A673 (cell line): ENCODE measurements at regions of chr18 and their contacts with region 1.

Region 1: GRCh38 chr18:55856229-55856628 is 268.2 kb upstream of the TCF4 start:
- DNase-seq: peak; percentile 57
- H3K4me3 ChIP-seq: no peak overlapping the region
- H3K27ac ChIP-seq: no peak overlapping the region
- H3K4me1 ChIP-seq: peaks cover 37% of the 10 kb centered on the region
- H3K27me3 ChIP-seq: no peaks in the 10 kb centered on the region
- CTCF ChIP-seq: no peak

Region 2: DNA sequence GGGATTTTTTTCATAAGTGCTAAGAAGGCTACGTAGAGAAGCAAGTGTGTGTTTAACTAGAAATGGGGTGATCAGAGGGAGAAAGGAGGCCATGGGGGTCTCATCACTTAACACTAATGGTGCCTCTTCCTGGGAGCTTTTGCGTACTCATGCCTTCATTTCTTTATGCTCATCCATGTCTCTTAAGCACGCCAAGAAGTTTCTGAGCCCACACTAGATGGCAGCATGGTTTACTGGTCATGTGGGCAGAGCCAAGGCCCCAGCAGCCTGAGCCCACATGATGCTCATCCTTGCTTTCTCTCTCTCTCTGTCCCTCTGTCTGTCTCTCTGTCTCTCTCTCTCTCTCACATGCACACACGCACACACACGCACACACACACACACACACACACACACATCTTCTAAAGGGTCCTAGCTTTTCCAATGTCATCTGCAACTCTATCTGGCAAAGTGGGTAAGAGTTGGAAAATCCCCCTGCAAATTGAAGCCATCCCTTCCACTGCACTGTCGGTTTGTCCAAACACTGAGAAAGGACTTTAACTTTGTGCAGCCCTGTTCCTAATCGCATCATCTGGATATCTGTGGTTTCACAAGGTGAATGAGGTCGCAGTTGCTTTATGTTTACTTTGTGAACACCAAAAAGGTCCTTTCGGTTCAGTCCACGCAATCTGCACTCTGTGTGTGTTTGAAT is 759.8 kb before region 1 on chr18:
- CTCF ChIA-PET with region 1: no interaction called
- POLR2A ChIA-PET with region 1: no interaction called
- intact Hi-C with region 1: loop called (anchors 10 kb)
- DNase-seq: peak; percentile 79
- H3K4me3 ChIP-seq: no peak overlapping the region
- H3K27ac ChIP-seq: no peak overlapping the region
- H3K4me1 ChIP-seq: peaks cover 9% of the 10 kb centered on the region
- H3K27me3 ChIP-seq: peaks cover 30% of the 10 kb centered on the region
- CTCF ChIP-seq: peak; percentile 71

Region 3: DNA sequence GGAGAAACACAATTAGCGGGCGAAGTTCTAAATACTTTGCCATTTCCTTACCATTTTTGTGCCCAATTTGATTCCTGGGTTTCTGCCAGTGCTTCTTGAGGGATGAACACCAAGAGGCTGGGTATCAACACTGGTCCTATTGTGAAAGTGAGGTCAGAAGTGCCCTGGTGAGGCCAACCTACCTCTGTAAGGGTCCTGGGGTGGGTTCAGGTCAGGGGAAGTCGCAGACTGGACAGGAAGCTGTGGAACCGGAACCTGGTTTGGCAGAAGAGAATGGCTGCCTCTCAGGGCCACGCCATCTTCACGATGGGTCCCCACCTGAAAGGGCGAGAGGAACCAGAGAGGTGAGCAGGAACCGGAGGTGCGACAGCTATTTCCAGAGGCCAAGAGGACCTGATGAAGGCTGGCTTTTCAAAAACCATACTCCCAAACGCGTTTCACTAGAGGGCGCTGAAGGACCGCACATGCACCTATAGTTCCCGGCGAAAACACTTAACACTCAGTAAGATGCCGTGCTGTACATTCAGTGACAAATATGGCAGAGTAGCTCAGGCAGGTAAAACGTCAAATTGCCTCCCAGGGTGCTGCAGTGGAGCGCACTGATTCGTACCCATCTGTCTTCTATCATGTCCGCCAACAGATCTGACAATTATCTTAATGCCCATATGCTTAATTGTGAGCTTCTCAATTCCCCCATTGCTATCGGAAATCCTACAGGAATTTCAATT is 621.7 kb before region 1 on chr18:
- CTCF ChIA-PET with region 1: interaction called, 6 read pairs
- POLR2A ChIA-PET with region 1: no interaction called
- intact Hi-C with region 1: loop called (anchors 10 kb)
- DNase-seq: peak; percentile 91
- H3K4me3 ChIP-seq: peak overlapping the region; percentile 3
- H3K27ac ChIP-seq: peak overlapping the region; percentile 19
- H3K4me1 ChIP-seq: peaks cover 32% of the 10 kb centered on the region
- H3K27me3 ChIP-seq: no peaks in the 10 kb centered on the region
- CTCF ChIP-seq: peak; percentile 83

Region 4: DNA sequence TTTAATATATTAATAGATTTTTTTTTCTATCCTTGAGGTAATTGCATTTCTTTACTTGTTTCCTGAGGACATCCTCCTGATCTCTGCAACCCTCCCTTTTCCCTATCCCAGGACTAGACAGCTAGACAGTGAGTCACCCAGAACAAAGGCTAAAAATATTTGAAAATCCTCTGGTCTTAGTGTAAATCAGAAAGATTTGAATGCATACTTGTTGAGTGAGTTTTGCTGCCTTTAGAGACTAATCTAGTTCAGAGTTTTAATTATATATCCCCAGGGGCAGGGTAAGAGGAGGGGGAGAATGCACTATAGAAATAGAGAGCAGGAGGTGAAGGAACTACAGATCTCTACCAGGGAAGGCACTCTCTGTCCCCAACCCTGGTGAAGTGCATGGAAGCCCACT is 65.9 kb before region 1 on chr18:
- CTCF ChIA-PET with region 1: no interaction called
- POLR2A ChIA-PET with region 1: no interaction called
- intact Hi-C with region 1: loop called (anchors 5 kb)
- DNase-seq: peak; percentile 81
- H3K4me3 ChIP-seq: no peak overlapping the region
- H3K27ac ChIP-seq: no peak overlapping the region
- H3K4me1 ChIP-seq: peaks cover 4% of the 10 kb centered on the region
- H3K27me3 ChIP-seq: no peaks in the 10 kb centered on the region
- CTCF ChIP-seq: no peak

Region 5: DNA sequence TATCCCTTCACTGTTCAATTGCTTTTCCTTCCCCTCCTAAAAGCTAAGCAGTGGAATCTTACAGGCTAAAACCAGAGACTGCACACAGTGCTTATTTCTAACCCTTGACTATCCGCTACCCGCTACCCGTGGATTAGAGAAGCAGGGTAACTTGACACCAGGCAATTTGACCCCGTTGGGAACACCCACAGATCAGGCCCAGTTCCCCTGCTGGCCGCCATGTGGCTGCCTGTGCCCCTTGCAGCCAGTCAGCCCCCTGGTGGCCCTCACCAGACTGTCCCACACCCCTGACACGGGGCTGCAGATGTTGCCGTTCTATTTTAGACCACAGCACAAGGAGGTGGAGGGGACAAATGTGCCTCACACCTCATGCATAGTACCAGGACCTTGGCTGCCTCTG is 707.3 kb after region 1 on chr18:
- CTCF ChIA-PET with region 1: no interaction called
- POLR2A ChIA-PET with region 1: no interaction called
- intact Hi-C with region 1: loop called (anchors 10 kb)
- DNase-seq: no peak
- H3K4me3 ChIP-seq: no peak overlapping the region
- H3K27ac ChIP-seq: no peak overlapping the region
- H3K4me1 ChIP-seq: peaks cover 4% of the 10 kb centered on the region
- H3K27me3 ChIP-seq: no peaks in the 10 kb centered on the region
- CTCF ChIP-seq: peak; percentile 38